Activated B cell treated with CpG ODN at 0.5 μM for 24 hours (primary cell): ENCODE measurements at regions of chr10 and their contacts with region 1.

Region 1: GRCh38 chr10:92729886-92730285 is 40.1 kb downstream of the HHEX start:
- DNase-seq: no peak
- ATAC-seq: peak; percentile 72
- H3K4me3 Mint-ChIP-seq: no peak overlapping the region
- H3K27ac Mint-ChIP-seq: no peak overlapping the region
- H3K4me1 Mint-ChIP-seq: peaks cover 50% of the 10 kb centered on the region
- H3K27me3 Mint-ChIP-seq: no peaks in the 10 kb centered on the region
- CTCF ChIP-seq: no peak

Region 2: DNA sequence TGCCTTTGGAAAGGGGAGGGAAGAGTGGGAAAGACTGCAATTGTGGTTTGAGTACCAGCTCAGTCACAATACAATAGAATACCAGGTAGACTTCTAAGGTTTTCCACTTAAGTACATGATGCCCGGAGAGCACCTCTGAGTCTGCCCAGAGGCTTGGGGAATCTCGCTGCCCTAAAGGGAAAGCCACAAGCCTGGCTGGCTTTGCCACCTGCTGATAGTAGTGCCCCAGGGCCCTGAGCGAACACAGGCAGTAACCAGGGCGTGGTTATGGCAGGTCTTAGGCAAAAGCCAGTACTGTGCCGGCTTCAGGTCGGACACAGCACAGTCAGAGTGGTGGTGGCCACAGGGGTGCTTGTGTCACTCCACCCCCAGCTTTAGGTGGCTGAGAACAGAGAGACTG is 672.5 kb before region 1 on chr10:
- CTCF ChIA-PET with region 1: no interaction called
- POLR2A ChIA-PET with region 1: no interaction called
- intact Hi-C with region 1: no loop called
- DNase-seq: no peak
- ATAC-seq: no peak
- H3K4me3 Mint-ChIP-seq: no peak overlapping the region
- H3K27ac Mint-ChIP-seq: no peak overlapping the region
- H3K4me1 Mint-ChIP-seq: no peaks in the 10 kb centered on the region
- H3K27me3 Mint-ChIP-seq: no peaks in the 10 kb centered on the region
- CTCF ChIP-seq: no peak

Region 3: GRCh38 chr10:92407305-92408016 is 322.4 kb before region 1 on chr10:
- CTCF ChIA-PET with region 1: no interaction called
- POLR2A ChIA-PET with region 1: no interaction called
- intact Hi-C with region 1: no loop called
- DNase-seq: no peak
- ATAC-seq: no peak
- H3K4me3 Mint-ChIP-seq: no peak overlapping the region
- H3K27ac Mint-ChIP-seq: no peak overlapping the region
- H3K4me1 Mint-ChIP-seq: no peaks in the 10 kb centered on the region
- H3K27me3 Mint-ChIP-seq: peaks cover 2% of the 10 kb centered on the region
- CTCF ChIP-seq: no peak

Region 4: DNA sequence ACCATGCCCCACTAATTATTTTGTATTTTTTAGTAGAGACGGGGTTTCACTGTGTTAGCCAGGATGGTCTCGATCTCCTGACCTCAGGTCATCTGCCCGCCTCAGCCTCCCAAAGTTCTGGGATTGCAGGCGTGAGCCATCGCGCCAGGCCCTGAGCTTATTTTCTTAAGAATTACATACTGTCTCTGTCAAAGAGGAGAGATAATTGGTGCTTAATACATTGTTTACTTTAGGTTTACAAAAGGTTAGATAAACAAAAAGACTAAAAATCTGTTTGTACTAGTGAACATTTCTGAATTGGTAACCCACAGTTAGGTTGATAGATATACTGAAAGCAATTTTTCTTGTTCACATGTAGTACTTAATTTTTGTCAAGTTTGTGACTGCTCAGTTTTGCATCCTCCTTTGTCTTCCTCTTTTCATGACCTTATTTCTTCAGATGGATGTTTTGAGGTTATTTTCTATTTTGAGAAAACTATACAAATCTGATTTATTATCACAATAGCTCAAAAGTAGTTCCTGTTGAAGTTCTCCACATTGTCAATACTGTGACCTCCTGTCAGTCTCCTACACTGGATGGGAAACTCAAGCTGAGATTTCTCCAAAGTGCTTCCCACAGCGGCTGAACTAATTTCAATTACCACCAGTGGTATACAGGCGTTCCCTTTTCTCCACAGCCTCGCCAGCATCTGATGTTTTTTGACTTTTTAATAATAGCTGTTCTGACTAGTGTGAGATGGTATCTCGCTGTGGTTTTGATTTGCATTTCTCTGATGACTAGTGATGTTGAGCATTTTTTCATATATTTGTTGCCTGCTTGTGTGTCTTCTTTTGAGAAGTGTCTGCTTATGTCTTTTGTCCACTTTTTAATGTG is 17.6 kb before region 1 on chr10:
- CTCF ChIA-PET with region 1: no interaction called
- POLR2A ChIA-PET with region 1: interaction called, 11 read pairs
- intact Hi-C with region 1: loop called (anchors 2 kb)
- DNase-seq: no peak
- ATAC-seq: peak; percentile 74
- H3K4me3 Mint-ChIP-seq: peak overlapping the region; percentile 60
- H3K27ac Mint-ChIP-seq: peak overlapping the region; percentile 85
- H3K4me1 Mint-ChIP-seq: peaks cover 65% of the 10 kb centered on the region
- H3K27me3 Mint-ChIP-seq: no peaks in the 10 kb centered on the region
- CTCF ChIP-seq: no peak